ENCODE measurements at regions of chr6 and their contacts with region 1.

Region 1: GRCh38 chr6:43143235-43144124 is 27.6 kb upstream of the SRF start:
- DNase-seq: peak; percentile 64 to 86 (median 73)
- H3K4me3 ChIP-seq: peak overlapping the region; percentile 29
- H3K4me3 Mint-ChIP-seq: peak overlapping the region; percentile 43 to 81 (median 65)
- H3K27ac ChIP-seq: no peak overlapping the region
- H3K27ac Mint-ChIP-seq: peak overlapping the region in 7 of 8 donors; percentile 13 to 91 (median 75)
- H3K4me1 ChIP-seq: peaks cover 21% of the 10 kb centered on the region
- H3K4me1 Mint-ChIP-seq: peaks cover 21 to 27% (median 26%) of the 10 kb centered on the region in 3 donors
- H3K27me3 ChIP-seq: no peaks in the 10 kb centered on the region
- H3K27me3 Mint-ChIP-seq: peaks cover 2 to 6% of the 10 kb centered on the region in 2 donors

Region 2: GRCh38 chr6:42901536-42901957 is 241.9 kb before region 1 on chr6:
- CTCF ChIA-PET with region 1: interaction called, 28 read pairs
- POLR2A ChIA-PET with region 1: interaction called, 4 read pairs
- DNase-seq: peak; percentile 31 to 80 (median 72)
- H3K4me3 ChIP-seq: no peak overlapping the region
- H3K4me3 Mint-ChIP-seq: no peak overlapping the region
- H3K27ac ChIP-seq: no peak overlapping the region
- H3K27ac Mint-ChIP-seq: no peak overlapping the region
- H3K4me1 ChIP-seq: no peaks in the 10 kb centered on the region
- H3K4me1 Mint-ChIP-seq: peaks cover 8 to 14% (median 10%) of the 10 kb centered on the region in 3 donors
- H3K27me3 ChIP-seq: no peaks in the 10 kb centered on the region
- H3K27me3 Mint-ChIP-seq: peaks cover 0 to 1% of the 10 kb centered on the region in 2 donors

Region 3: DNA sequence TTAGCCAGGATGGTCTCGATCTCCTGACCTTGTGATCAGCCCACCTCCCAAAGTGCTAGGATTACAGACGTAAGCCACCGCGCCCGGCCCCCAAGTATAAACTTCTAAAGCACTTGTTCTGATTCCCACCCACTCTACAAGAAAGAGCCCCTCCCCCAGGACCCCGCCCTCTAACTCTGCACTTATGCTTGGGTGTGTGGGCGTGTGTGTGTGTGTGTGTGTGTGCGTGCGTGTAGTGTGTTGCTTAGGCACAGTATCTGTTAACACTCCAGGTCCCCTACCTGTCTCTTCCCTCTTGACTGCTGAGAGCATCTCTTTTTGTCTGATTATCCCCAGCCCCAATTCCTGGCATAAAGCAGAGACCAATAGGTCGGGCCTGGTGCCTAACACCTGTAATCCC is 233.6 kb before region 1 on chr6:
- CTCF ChIA-PET with region 1: interaction called, 11 read pairs
- POLR2A ChIA-PET with region 1: no interaction called
- DNase-seq: no peak
- H3K4me3 ChIP-seq: no peak overlapping the region
- H3K4me3 Mint-ChIP-seq: no peak overlapping the region
- H3K27ac ChIP-seq: no peak overlapping the region
- H3K27ac Mint-ChIP-seq: no peak overlapping the region
- H3K4me1 ChIP-seq: no peaks in the 10 kb centered on the region
- H3K4me1 Mint-ChIP-seq: peaks cover 0 to 3% (median 3%) of the 10 kb centered on the region in 3 donors
- H3K27me3 ChIP-seq: peaks cover 8% of the 10 kb centered on the region
- H3K27me3 Mint-ChIP-seq: peaks cover 13 to 16% of the 10 kb centered on the region in 2 donors

Region 4: DNA sequence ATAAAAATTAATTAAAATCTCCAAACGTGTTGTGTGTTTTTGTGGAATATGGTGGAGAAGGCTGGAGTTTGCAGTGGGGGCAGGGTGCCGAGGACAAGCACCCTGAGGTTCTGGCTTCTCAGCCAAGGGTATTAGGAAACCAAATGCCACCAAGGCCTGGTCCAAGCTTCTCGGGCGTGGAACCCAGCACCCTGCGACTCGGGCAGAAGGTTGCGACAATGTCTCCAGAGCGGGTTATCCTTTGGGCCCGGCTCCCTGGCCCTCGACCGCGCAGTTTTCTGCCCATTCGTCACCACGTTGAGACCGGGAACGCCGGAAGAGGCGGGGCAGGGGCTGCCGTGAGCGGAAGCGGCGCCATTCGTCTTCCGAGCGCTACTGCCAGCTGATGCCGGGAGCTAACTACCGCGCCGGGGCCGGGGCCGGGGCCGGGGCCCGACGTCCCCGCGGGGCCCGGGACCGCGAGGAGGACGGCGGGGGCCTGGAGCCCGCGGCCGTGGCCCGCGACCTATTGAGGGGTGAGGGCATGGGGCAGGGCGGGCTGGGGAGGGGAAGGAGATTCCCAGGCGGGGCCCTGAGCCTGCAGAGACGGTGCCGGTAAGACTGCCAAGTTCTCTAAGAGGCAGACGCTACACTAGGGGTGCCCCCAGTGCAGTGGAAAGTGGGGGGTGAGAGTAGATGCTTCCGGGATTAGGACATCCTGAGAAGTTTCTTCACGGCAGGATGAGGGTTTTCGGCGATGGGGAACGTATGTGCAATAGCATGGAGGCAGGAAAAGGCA is 122.0 kb before region 1 on chr6 and contains the start of gene RRP36:
- CTCF ChIA-PET with region 1: interaction called, 13 read pairs
- POLR2A ChIA-PET with region 1: no interaction called
- DNase-seq: peak; percentile 52 to 73 (median 56)
- H3K4me3 ChIP-seq: peak within 1 kb of the TSS; percentile 92
- H3K4me3 Mint-ChIP-seq: peak within 1 kb of the TSS; percentile 95 to 99 (median 97)
- H3K27ac ChIP-seq: peak within 1 kb of the TSS; percentile 71
- H3K27ac Mint-ChIP-seq: peak within 1 kb of the TSS; percentile 84 to 98 (median 95)
- H3K4me1 ChIP-seq: peaks cover 39% of the 10 kb centered on the region
- H3K4me1 Mint-ChIP-seq: peaks cover 27 to 47% (median 35%) of the 10 kb centered on the region in 3 donors
- H3K27me3 ChIP-seq: no peaks in the 10 kb centered on the region
- H3K27me3 Mint-ChIP-seq: no peaks in the 10 kb centered on the region
- total RNA-seq, gene RRP36: 114 to 120 TPM

Measured in CD8-positive, alpha-beta memory T cell (primary cell).